ENCODE measurements at regions of chr19 and their contacts with region 1.

Region 1: GRCh38 chr19:12757544-12758274 is 6.1 kb downstream of the BEST2 start:
- DNase-seq: peak; percentile 72
- ATAC-seq: peak; percentile 83
- H3K4me3 Mint-ChIP-seq: peak overlapping the region; percentile 31
- H3K27ac Mint-ChIP-seq: no peak overlapping the region
- H3K4me1 Mint-ChIP-seq: peaks cover 11% of the 10 kb centered on the region
- H3K27me3 Mint-ChIP-seq: peaks cover 5% of the 10 kb centered on the region

Region 2: DNA sequence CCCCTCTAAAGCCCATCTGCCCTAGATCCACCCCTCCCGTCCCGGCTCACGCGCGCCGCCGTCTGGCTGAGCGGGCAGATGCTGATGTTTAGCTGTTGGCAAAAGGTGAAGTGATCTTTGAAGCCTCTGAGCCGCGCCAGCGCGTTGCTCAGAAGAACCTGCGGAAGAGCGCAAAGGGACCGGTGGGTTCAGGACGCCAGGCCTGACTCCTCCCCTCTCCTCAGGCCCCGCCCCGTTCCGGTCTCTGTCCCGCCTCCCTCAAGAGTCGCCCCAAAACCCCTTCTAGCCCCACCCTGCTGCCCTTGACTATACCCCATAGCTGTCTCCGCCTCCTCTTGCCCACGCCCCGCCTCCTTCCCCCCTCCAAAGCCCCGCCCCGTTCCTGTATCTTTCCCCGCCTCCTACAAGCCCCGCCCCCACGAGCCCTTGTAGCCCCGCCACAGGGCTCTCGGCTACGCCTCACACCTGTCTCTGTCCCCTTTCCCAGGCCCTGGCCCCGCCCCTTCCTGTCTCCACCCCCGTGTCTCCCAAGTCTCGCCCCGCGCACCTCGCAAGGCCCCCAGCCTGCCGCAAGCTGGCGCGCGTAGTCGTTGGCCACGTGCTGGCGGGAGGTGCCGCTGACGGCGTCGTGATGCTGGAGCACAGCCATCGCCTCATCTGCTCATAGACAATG is 100.7 kb before region 1 on chr19:
- CTCF ChIA-PET with region 1: no interaction called
- POLR2A ChIA-PET with region 1: no interaction called
- DNase-seq: no peak
- ATAC-seq: peak; percentile 35
- H3K4me3 Mint-ChIP-seq: no peak overlapping the region
- H3K27ac Mint-ChIP-seq: no peak overlapping the region
- H3K4me1 Mint-ChIP-seq: no peaks in the 10 kb centered on the region
- H3K27me3 Mint-ChIP-seq: no peaks in the 10 kb centered on the region

Region 3: GRCh38 chr19:12716861-12717260 is 40.8 kb before region 1 on chr19:
- CTCF ChIA-PET with region 1: interaction called, 81 read pairs
- POLR2A ChIA-PET with region 1: no interaction called
- DNase-seq: peak; percentile 62
- ATAC-seq: peak; percentile 63
- H3K4me3 Mint-ChIP-seq: no peak overlapping the region
- H3K27ac Mint-ChIP-seq: peak overlapping the region; percentile 17
- H3K4me1 Mint-ChIP-seq: peaks cover 20% of the 10 kb centered on the region
- H3K27me3 Mint-ChIP-seq: no peaks in the 10 kb centered on the region

Region 4: GRCh38 chr19:12736995-12737834 is 20.5 kb before region 1 on chr19 and contains the start of gene GET3:
- CTCF ChIA-PET with region 1: interaction called, 204 read pairs
- POLR2A ChIA-PET with region 1: interaction called, 7 read pairs
- DNase-seq: peak; percentile 89
- ATAC-seq: peak; percentile 85
- H3K4me3 Mint-ChIP-seq: peak within 1 kb of the TSS; percentile 100
- H3K27ac Mint-ChIP-seq: peak within 1 kb of the TSS; percentile 98
- H3K4me1 Mint-ChIP-seq: peaks cover 43% of the 10 kb centered on the region
- H3K27me3 Mint-ChIP-seq: no peaks in the 10 kb centered on the region
- total RNA-seq, gene GET3: 66.8 to 71.5 TPM

Region 5: GRCh38 chr19:12789904-12790619 is 32.4 kb after region 1 on chr19:
- CTCF ChIA-PET with region 1: interaction called, 383 read pairs
- POLR2A ChIA-PET with region 1: interaction called, 7 read pairs
- DNase-seq: peak; percentile 97
- ATAC-seq: peak; percentile 50
- H3K4me3 Mint-ChIP-seq: peak overlapping the region; percentile 92
- H3K27ac Mint-ChIP-seq: peak overlapping the region; percentile 97
- H3K4me1 Mint-ChIP-seq: peaks cover 35% of the 10 kb centered on the region
- H3K27me3 Mint-ChIP-seq: no peaks in the 10 kb centered on the region

Region 6: DNA sequence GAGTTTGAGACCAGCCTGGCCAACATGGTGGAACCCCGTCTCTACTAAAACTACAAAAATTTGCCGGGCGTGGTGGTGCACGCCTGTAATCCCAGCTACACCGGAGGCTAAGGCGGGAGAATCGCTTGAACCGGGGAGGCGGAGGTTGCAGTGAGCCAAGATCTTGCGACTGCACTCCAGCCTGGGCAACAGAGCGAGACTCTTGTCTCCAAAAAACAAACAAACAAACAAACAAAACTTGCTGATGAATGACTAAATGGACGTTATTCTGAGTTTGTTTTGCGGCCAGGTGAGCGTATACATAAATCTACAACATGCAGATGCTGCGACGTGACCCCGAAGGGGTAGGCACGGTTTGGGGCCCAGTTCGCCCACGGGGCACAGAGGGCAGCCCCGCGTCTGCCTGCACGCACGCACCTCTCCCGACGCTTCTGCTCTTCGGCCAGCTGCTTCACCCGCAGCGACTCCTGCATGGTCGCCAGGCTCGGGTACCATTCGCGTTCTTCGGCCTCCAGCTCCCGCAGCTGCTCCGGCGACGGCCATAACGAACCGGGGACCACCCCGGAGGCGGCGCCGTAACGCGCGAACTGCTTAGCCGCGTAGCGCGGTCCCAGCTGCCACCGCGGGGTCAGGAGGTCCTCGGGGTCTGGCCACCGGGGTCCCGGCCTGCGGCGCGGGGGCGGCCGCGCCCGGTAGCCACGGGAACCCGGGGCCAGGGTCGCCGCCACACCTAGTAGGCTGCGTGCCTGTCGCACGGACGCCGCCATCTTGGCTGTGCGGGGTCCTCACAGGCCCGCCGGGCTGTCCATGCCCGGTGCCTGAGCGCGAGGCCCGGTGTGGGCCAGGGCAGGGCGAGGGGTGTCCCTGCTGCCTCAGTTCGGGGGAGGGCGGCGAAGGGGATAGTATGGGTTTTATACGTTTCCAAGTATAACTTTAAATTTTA is 199.0 kb after region 1 on chr19 and contains the start of gene GADD45GIP1:
- CTCF ChIA-PET with region 1: no interaction called
- POLR2A ChIA-PET with region 1: no interaction called
- DNase-seq: peak; percentile 86
- ATAC-seq: peak; percentile 96
- H3K4me3 Mint-ChIP-seq: peak within 1 kb of the TSS; percentile 88
- H3K27ac Mint-ChIP-seq: peak within 1 kb of the TSS; percentile 96
- H3K4me1 Mint-ChIP-seq: peaks cover 42% of the 10 kb centered on the region
- H3K27me3 Mint-ChIP-seq: no peaks in the 10 kb centered on the region
- total RNA-seq, gene GADD45GIP1: 23.4 to 25.4 TPM

Region 7: GRCh38 chr19:12983542-12984142 is 225.9 kb after region 1 on chr19:
- CTCF ChIA-PET with region 1: no interaction called
- POLR2A ChIA-PET with region 1: no interaction called
- DNase-seq: peak; percentile 82
- ATAC-seq: peak; percentile 78
- H3K4me3 Mint-ChIP-seq: no peak overlapping the region
- H3K27ac Mint-ChIP-seq: no peak overlapping the region
- H3K4me1 Mint-ChIP-seq: no peaks in the 10 kb centered on the region
- H3K27me3 Mint-ChIP-seq: peaks cover 2% of the 10 kb centered on the region